Activated CD4-positive, alpha-beta T cell treated with anti-CD3 and anti-CD28 coated beads, Interleukin-2, amount 10 ng/mL, durations not matched to agents 7 days and 5 days (primary cell): ENCODE measurements at regions of chr1 and their contacts with region 1.

Region 1: DNA sequence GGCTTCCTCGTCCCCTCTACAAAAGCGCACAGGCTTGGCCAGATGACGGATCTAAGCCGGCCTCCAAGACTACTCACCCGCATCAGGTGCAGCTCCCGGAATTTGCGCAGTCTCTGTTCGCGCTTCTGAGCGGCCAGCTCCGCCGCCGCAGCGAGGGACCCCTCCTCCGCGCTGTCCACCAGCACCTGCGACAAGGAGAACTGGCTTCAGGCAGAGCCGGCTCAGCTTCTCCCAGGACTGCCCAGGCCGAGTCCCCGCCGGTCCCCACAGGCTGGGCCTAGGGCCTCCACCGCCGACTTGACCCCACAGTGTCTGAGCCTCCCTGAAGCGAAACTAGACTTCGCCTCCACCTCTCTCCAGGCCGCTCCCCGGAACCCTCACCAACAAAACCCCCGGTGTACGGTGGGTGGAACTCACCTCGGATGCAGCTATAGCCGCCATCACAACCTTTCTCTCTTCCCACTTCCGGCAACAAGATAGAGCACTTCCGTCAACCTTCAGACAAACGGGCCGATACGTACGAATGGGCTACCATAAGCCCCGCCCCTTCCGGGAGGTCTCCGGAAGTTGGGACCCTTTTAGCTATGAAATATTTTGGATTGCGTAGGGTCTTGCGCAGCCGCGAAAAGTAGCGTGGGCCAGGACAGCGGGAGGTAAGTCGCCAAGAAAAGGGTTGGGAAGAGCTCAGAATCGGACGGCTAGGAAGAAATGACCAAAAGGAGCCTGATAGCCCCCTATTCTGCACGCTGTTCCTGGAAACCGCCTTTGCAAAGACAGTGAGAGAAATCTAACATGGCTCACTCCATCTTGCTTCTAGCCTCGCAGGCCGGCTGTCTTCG is at the start of gene SYF2:
- DNase-seq: peak; percentile 93
- H3K4me3 Mint-ChIP-seq: no peak within 1 kb of the TSS
- H3K27ac Mint-ChIP-seq: no peak within 1 kb of the TSS
- H3K4me1 Mint-ChIP-seq: peaks cover 37% of the 10 kb centered on the region
- H3K27me3 Mint-ChIP-seq: no peaks in the 10 kb centered on the region
- total RNA-seq, gene SYF2: 46.5 to 53.0 TPM

Region 2: GRCh38 chr1:24763671-24764070 is 468.6 kb before region 1 on chr1:
- CTCF ChIA-PET with region 1: no interaction called
- POLR2A ChIA-PET with region 1: interaction called, 11 read pairs
- DNase-seq: no peak
- H3K4me3 Mint-ChIP-seq: no peak overlapping the region
- H3K27ac Mint-ChIP-seq: no peak overlapping the region
- H3K4me1 Mint-ChIP-seq: no peaks in the 10 kb centered on the region
- H3K27me3 Mint-ChIP-seq: no peaks in the 10 kb centered on the region

Region 3: DNA sequence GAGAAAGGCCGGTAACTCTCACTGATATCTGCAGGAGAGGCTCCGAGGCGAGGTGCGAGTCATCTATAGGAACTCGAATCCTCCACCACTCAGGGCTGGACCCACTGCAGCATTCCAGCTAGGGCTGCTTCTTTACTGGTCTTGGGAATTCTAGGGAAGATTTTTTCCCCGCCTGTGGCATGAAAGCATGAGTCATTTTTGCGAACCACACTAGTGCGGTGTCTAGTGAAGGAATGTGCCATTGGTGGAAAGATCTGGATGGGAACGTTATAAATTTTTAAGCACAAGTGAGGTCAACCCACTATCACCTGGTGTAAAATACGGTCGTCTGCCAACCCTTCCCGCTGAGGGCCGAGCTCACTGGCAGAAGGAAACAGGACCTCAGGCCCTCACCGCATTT is 49.6 kb before region 1 on chr1:
- CTCF ChIA-PET with region 1: no interaction called
- POLR2A ChIA-PET with region 1: no interaction called
- DNase-seq: no peak
- H3K4me3 Mint-ChIP-seq: no peak overlapping the region
- H3K27ac Mint-ChIP-seq: no peak overlapping the region
- H3K4me1 Mint-ChIP-seq: no peaks in the 10 kb centered on the region
- H3K27me3 Mint-ChIP-seq: peaks cover 2% of the 10 kb centered on the region

Region 4: GRCh38 chr1:25247024-25247828 is 15.0 kb after region 1 on chr1 and contains the start of gene RSRP1:
- CTCF ChIA-PET with region 1: interaction called, 3 read pairs
- POLR2A ChIA-PET with region 1: interaction called, 23 read pairs
- DNase-seq: peak; percentile 100
- H3K4me3 Mint-ChIP-seq: peak within 1 kb of the TSS; percentile 98
- H3K27ac Mint-ChIP-seq: peak within 1 kb of the TSS; percentile 100
- H3K4me1 Mint-ChIP-seq: peaks cover 48% of the 10 kb centered on the region
- H3K27me3 Mint-ChIP-seq: no peaks in the 10 kb centered on the region
- total RNA-seq, gene RSRP1: 213 to 271 TPM